ENCODE measurements at regions of chr2 and their contacts with region 1.

Region 1: GRCh38 chr2:177489719-177490301 is 97.2 kb downstream of the AGPS start:
- DNase-seq: no peak
- H3K4me3 ChIP-seq: no peak overlapping the region
- H3K4me3 Mint-ChIP-seq: no peak overlapping the region
- H3K27ac ChIP-seq: no peak overlapping the region
- H3K27ac Mint-ChIP-seq: no peak overlapping the region
- H3K4me1 ChIP-seq: no peaks in the 10 kb centered on the region
- H3K4me1 Mint-ChIP-seq: peaks cover 0 to 3% (median 0%) of the 10 kb centered on the region in 4 donors
- H3K27me3 ChIP-seq: no peaks in the 10 kb centered on the region
- H3K27me3 Mint-ChIP-seq: no peaks in the 10 kb centered on the region

Region 2: GRCh38 chr2:177724398-177725287 is 234.8 kb after region 1 on chr2:
- CTCF ChIA-PET with region 1: interaction called, 3 read pairs
- POLR2A ChIA-PET with region 1: no interaction called
- intact Hi-C with region 1: loop called (anchors 2 kb)
- DNase-seq: peak in 4 of 5 donors; percentile 16 to 28 (median 22)
- H3K4me3 ChIP-seq: no peak overlapping the region
- H3K4me3 Mint-ChIP-seq: no peak overlapping the region
- H3K27ac ChIP-seq: no peak overlapping the region
- H3K27ac Mint-ChIP-seq: no peak overlapping the region
- H3K4me1 ChIP-seq: no peaks in the 10 kb centered on the region
- H3K4me1 Mint-ChIP-seq: no peaks in the 10 kb centered on the region
- H3K27me3 ChIP-seq: no peaks in the 10 kb centered on the region
- H3K27me3 Mint-ChIP-seq: peaks cover 16 to 25% of the 10 kb centered on the region in 2 donors

Region 3: GRCh38 chr2:177763532-177764265 is 273.9 kb after region 1 on chr2:
- CTCF ChIA-PET with region 1: interaction called, 4 read pairs
- POLR2A ChIA-PET with region 1: no interaction called
- intact Hi-C with region 1: loop called (anchors 5 kb)
- DNase-seq: peak; percentile 60 to 74 (median 70)
- H3K4me3 ChIP-seq: no peak overlapping the region
- H3K4me3 Mint-ChIP-seq: peak overlapping the region in 3 of 8 donors; percentile 14 to 24 (median 22)
- H3K27ac ChIP-seq: no peak overlapping the region
- H3K27ac Mint-ChIP-seq: no peak overlapping the region
- H3K4me1 ChIP-seq: peaks cover 5% of the 10 kb centered on the region
- H3K4me1 Mint-ChIP-seq: peaks cover 0 to 6% (median 3%) of the 10 kb centered on the region in 4 donors
- H3K27me3 ChIP-seq: peaks cover 6% of the 10 kb centered on the region
- H3K27me3 Mint-ChIP-seq: peaks cover 4 to 12% of the 10 kb centered on the region in 2 donors

Region 4: DNA sequence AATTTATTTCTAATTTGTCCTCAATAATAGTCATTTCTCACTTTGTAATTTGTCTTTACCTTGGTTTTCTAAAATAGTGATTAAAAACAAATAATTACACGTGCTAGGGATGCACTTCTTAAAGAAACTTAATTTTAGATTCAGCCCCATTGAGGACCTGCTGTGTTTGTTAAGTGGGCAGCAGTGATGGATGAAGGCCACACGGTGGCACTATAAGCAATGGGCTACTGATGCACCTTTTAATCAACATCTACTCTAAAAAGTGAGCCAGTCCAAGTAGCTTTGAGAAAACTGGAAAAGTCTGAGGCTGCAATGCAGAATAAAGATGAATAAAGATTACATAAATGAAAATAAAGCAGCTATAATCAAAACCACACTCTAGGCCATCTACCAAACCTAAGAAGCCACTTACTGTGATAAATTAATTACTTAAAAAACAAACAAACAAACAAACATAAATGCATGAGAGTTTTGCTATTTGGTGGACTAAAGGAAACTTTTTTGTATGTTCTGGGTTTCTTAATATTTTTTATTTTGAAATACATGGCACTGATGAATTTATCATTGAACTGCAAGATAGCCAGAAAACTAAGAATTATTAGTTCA is 493.5 kb after region 1 on chr2:
- CTCF ChIA-PET with region 1: no interaction called
- POLR2A ChIA-PET with region 1: no interaction called
- intact Hi-C with region 1: no loop called
- DNase-seq: no peak
- H3K4me3 ChIP-seq: no peak overlapping the region
- H3K4me3 Mint-ChIP-seq: no peak overlapping the region
- H3K27ac ChIP-seq: no peak overlapping the region
- H3K27ac Mint-ChIP-seq: no peak overlapping the region
- H3K4me1 ChIP-seq: no peaks in the 10 kb centered on the region
- H3K4me1 Mint-ChIP-seq: no peaks in the 10 kb centered on the region
- H3K27me3 ChIP-seq: no peaks in the 10 kb centered on the region
- H3K27me3 Mint-ChIP-seq: peaks cover 2 to 7% of the 10 kb centered on the region in 2 donors

Measured in CD4-positive, alpha-beta memory T cell (primary cell).